T-cell (primary cell): ENCODE measurements at regions of chr5 and their contacts with region 1.

Region 1: DNA sequence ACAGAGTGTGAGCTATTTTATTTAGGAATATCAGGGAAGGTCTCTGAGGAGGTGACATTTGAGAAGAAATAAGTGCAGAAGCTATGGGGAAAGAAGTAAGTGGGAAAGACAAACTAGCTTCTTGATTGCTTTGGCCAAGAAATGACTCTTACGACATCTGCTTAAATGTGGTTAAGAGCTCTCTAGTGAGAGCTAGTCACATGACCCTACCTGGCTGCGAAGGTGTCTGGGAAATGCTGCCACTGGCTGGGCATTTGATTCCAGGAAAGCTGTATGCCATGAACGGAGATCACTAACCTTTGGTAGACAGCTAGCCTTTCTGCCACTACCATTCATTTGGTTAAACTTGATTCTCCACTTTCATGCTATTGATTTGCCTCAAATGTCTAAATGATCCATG is 80.1 kb downstream of the KIAA0825 start:
- DNase-seq: no peak
- ATAC-seq: no peak
- H3K4me3 ChIP-seq: no peak overlapping the region
- H3K4me3 Mint-ChIP-seq: no peak overlapping the region
- H3K27ac ChIP-seq: no peak overlapping the region
- H3K27ac Mint-ChIP-seq: no peak overlapping the region
- H3K4me1 ChIP-seq: no peaks in the 10 kb centered on the region
- H3K4me1 Mint-ChIP-seq: no peaks in the 10 kb centered on the region
- H3K27me3 ChIP-seq: no peaks in the 10 kb centered on the region
- H3K27me3 Mint-ChIP-seq: no peaks in the 10 kb centered on the region

Region 2: GRCh38 chr5:94471496-94471895 is 66.8 kb before region 1 on chr5:
- CTCF ChIA-PET with region 1: no interaction called
- POLR2A ChIA-PET with region 1: interaction called in 1 of 2 experiments, 20 read pairs
- DNase-seq: no peak
- ATAC-seq: no peak
- H3K4me3 ChIP-seq: no peak overlapping the region
- H3K4me3 Mint-ChIP-seq: no peak overlapping the region
- H3K27ac ChIP-seq: no peak overlapping the region
- H3K27ac Mint-ChIP-seq: no peak overlapping the region
- H3K4me1 ChIP-seq: no peaks in the 10 kb centered on the region
- H3K4me1 Mint-ChIP-seq: no peaks in the 10 kb centered on the region
- H3K27me3 ChIP-seq: no peaks in the 10 kb centered on the region
- H3K27me3 Mint-ChIP-seq: no peaks in the 10 kb centered on the region

Region 3: GRCh38 chr5:94562327-94562971 is 24.2 kb after region 1 on chr5:
- CTCF ChIA-PET with region 1: no interaction called
- POLR2A ChIA-PET with region 1: no interaction called
- DNase-seq: no peak
- ATAC-seq: no peak
- H3K4me3 ChIP-seq: no peak overlapping the region
- H3K4me3 Mint-ChIP-seq: no peak overlapping the region
- H3K27ac ChIP-seq: no peak overlapping the region
- H3K27ac Mint-ChIP-seq: no peak overlapping the region
- H3K4me1 ChIP-seq: no peaks in the 10 kb centered on the region
- H3K4me1 Mint-ChIP-seq: no peaks in the 10 kb centered on the region
- H3K27me3 ChIP-seq: no peaks in the 10 kb centered on the region
- H3K27me3 Mint-ChIP-seq: no peaks in the 10 kb centered on the region